H1 (cell line): ENCODE measurements at regions of chr12 and their contacts with region 1.

Region 1: DNA sequence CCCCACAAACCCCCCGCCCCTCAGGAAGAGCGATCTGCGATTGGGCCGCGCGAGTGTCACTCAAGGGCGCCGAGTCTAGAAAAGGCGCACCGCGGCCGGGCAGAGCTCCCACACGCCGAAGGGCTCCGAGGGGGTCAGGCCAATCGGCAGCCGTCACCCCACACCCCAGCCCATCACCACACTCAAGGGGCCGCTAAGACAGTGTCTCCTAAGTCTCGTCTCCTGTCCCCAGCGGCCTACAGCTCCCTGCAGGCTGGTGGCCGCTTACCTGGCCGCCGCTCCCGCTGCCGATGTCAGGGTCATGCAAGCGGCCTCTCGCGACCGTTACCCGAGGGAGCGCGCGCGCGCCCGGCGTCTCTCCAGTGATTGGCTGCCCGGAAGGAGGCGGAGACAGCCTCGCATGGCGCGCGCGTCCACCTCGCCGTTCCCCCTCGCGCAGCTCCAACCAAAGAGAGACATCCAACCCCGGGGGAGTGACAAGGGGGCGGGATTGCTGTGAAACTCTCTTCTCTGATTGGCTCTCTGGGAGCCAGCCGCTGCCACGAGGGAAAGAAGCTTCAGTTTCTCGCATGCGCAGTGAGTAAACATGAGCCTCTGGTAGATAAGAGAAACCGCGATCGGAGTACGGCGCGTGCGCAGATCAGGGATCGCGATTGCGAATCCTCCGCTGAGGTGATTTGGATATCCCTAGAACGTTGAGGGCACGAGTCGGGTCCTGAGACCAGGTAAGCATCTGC is at the starts of genes MPHOSPH9 and MTRFR:
- DNase-seq: peak; percentile 96 to 98
- H3K4me3 ChIP-seq: peak within 1 kb of the TSS; percentile 59 to 94 (median 89)
- H3K27ac ChIP-seq: peak within 1 kb of the TSS; percentile 47
- H3K4me1 ChIP-seq: peaks cover 0 to 4% (median 2%) of the 10 kb centered on the region in 4 experiments; a peak in 3 of 7 replicates
- H3K27me3 ChIP-seq: no peaks in the 10 kb centered on the region
- CTCF ChIP-seq: no peak
- EP300 ChIP-seq: no peak
- POLR2A ChIP-seq: peak; percentile 84 to 94
- RAD21 ChIP-seq: no peak
- total RNA-seq, gene MPHOSPH9: 47.7 and 48.8 TPM in 2 replicates
- total RNA-seq, gene MTRFR: 12.0 and 12.9 TPM in 2 replicates

Region 2: GRCh38 chr12:122980183-122981046 is 252.6 kb before region 1 on chr12 and contains the start of gene ARL6IP4:
- CTCF ChIA-PET with region 1: interaction called, 8 read pairs
- POLR2A ChIA-PET with region 1: interaction called, 21 read pairs
- DNase-seq: peak in 1 of 2 experiments; percentile 78
- H3K4me3 ChIP-seq: peak within 1 kb of the TSS; percentile 77 to 92 (median 85)
- H3K27ac ChIP-seq: peak within 1 kb of the TSS; percentile 47
- H3K4me1 ChIP-seq: peaks cover 0 to 20% (median 11%) of the 10 kb centered on the region in 4 experiments; a peak in 6 of 7 replicates
- H3K27me3 ChIP-seq: no peaks in the 10 kb centered on the region
- CTCF ChIP-seq: no peak
- EP300 ChIP-seq: no peak
- POLR2A ChIP-seq: peak in 1 of 2 experiments; percentile 50; a peak in 1 of 3 replicates
- RAD21 ChIP-seq: 0 out of 4 replicates have a peak, but pooled peaks of 1 of the 2 experiments have one; percentile 3
- total RNA-seq, gene ARL6IP4: 109 and 115 TPM in 2 replicates

Region 3: DNA sequence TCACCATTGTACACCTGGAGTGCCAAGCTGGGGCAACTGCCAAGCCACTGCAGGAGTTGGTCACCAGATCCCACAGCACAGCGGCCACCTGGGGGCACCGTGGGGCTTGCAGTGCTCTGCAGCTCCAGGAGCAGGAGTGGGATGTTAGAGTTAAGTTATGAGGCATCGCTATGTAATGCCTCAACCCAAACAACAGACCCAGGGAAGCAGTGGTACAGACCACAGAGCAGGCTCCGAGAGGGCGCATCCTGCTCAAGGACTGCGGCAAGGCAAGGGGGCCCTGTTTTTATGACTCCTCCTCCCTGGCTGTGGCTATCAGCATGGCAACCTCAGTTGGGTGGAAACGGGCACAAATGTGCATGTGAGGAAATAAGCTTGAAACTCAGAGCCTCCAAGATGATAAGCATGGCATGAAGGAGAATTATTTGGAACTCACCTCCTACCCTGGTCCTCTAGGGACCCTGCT is 189.4 kb before region 1 on chr12:
- CTCF ChIA-PET with region 1: interaction called, 43 read pairs
- POLR2A ChIA-PET with region 1: interaction called, 13 read pairs
- DNase-seq: peak; percentile 27 to 68
- H3K4me3 ChIP-seq: no peak overlapping the region
- H3K27ac ChIP-seq: no peak overlapping the region
- H3K4me1 ChIP-seq: no peaks in the 10 kb centered on the region; a peak in 1 of 7 replicates
- H3K27me3 ChIP-seq: no peaks in the 10 kb centered on the region; a peak in 1 of 7 replicates
- CTCF ChIP-seq: peak; percentile 66 to 77 (median 68)
- EP300 ChIP-seq: no peak
- POLR2A ChIP-seq: no peak
- RAD21 ChIP-seq: peak; percentile 82 to 89

Region 4: DNA sequence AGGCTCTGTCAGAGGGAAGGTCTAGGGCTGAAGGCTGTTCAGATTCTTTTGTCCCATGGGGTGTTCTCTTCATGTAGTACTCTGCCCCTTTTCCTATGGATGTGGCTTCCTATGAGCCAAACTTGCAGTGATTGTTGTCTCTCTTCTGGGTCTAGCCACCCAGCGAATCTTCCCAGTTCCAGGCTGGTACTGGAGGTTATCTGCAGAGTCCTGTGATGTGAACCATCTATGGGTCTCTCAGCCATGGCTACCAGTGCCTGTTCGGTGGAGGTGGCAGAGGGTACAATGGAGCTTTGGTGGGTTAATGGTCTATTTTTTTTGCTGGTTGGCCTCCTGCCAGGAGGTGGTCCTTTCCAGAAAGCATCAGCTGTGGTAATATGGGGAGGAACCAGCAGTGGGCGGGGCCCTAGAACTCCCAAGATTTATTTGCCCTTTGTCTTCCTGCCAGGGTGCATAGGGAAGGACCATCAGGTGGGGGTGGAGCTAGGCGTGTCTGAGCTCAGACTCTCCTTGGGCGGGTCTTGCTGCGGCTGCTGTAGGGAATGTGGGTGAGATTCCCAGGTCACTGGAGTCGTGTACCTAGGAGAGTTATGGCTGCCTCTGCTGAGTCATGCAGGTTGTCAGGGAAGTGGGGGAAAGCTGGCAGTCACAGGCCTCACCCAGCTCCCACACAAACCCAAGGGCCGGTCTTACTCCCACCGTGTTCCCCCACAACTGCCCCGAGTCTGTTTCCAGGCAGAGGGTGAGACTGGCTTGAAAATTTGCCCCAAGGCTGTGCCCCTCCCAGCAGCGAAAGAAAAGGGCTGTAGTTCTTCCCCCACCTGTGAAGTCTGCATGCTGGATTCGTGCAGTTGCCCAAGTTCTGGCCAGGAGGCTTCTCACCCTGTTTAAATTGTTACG is 17.8 kb after region 1 on chr12:
- CTCF ChIA-PET with region 1: interaction called, 20 read pairs
- POLR2A ChIA-PET with region 1: interaction called, 27 read pairs
- DNase-seq: no peak
- H3K4me3 ChIP-seq: no peak overlapping the region
- H3K27ac ChIP-seq: no peak overlapping the region
- H3K4me1 ChIP-seq: peaks cover 0 to 5% (median 0%) of the 10 kb centered on the region in 4 experiments; a peak in 1 of 7 replicates
- H3K27me3 ChIP-seq: no peaks in the 10 kb centered on the region
- CTCF ChIP-seq: no peak
- EP300 ChIP-seq: no peak
- POLR2A ChIP-seq: no peak
- RAD21 ChIP-seq: no peak

Region 5: DNA sequence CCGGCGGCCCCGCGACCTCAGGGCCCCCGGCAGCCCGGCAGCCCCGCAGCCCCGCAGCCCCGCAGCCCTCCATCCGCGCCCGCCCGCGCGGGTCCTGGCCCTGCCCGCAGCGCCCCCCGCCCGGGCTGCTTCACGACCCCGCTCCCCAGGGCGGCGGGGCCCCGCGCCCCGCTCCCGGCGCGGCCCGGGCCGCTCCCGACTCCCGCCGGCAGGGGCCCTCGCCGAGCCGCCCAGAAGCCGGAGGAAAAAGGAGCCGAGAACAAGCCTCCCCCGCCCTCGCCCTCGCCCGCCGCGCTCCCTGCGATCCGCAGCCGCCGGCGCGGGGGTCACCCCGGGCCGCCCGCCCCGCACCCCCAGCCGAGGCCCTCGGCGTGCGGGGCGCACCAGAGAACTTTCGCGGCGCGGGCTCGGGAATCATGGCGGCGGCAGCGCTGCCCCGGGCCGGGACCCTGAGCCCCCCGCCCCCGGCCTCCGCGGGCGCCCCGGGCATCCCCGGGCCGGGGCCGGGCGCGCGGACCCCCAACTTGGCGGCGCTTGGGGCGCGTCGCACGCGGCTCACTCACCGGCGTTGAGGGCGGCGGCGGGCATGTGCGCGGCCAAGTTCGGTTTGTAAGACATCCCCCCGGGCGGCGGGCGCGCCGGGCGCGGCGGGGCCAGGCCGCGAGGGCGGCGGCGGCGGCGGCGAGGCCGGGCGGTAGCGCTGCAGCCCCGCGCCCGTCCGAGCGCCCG is 38.2 kb after region 1 on chr12:
- CTCF ChIA-PET with region 1: interaction called, 8 read pairs
- POLR2A ChIA-PET with region 1: interaction called, 42 read pairs
- DNase-seq: peak in 1 of 2 experiments; percentile 80
- H3K4me3 ChIP-seq: peak overlapping the region; percentile 75 to 94 (median 88)
- H3K27ac ChIP-seq: peak overlapping the region; percentile 85; the same call in 1 of the 2 replicates
- H3K4me1 ChIP-seq: peaks cover 2 to 17% (median 13%) of the 10 kb centered on the region in 4 experiments
- H3K27me3 ChIP-seq: no peaks in the 10 kb centered on the region
- CTCF ChIP-seq: peak in 2 of 3 experiments; percentile 49 to 56; a peak in 3 of 4 replicates
- EP300 ChIP-seq: no peak
- POLR2A ChIP-seq: 0 out of 3 replicates have a peak, but pooled peaks of 1 of the 2 experiments have one; percentile 50
- RAD21 ChIP-seq: peak; percentile 42 to 69

Region 6: GRCh38 chr12:123354600-123354999 is 121.6 kb after region 1 on chr12:
- CTCF ChIA-PET with region 1: no interaction called
- POLR2A ChIA-PET with region 1: no interaction called
- DNase-seq: no peak
- H3K4me3 ChIP-seq: no peak overlapping the region
- H3K27ac ChIP-seq: no peak overlapping the region
- H3K4me1 ChIP-seq: no peaks in the 10 kb centered on the region; a peak in 1 of 7 replicates
- H3K27me3 ChIP-seq: no peaks in the 10 kb centered on the region
- CTCF ChIP-seq: no peak
- EP300 ChIP-seq: no peak
- POLR2A ChIP-seq: no peak
- RAD21 ChIP-seq: no peak

Region 7: DNA sequence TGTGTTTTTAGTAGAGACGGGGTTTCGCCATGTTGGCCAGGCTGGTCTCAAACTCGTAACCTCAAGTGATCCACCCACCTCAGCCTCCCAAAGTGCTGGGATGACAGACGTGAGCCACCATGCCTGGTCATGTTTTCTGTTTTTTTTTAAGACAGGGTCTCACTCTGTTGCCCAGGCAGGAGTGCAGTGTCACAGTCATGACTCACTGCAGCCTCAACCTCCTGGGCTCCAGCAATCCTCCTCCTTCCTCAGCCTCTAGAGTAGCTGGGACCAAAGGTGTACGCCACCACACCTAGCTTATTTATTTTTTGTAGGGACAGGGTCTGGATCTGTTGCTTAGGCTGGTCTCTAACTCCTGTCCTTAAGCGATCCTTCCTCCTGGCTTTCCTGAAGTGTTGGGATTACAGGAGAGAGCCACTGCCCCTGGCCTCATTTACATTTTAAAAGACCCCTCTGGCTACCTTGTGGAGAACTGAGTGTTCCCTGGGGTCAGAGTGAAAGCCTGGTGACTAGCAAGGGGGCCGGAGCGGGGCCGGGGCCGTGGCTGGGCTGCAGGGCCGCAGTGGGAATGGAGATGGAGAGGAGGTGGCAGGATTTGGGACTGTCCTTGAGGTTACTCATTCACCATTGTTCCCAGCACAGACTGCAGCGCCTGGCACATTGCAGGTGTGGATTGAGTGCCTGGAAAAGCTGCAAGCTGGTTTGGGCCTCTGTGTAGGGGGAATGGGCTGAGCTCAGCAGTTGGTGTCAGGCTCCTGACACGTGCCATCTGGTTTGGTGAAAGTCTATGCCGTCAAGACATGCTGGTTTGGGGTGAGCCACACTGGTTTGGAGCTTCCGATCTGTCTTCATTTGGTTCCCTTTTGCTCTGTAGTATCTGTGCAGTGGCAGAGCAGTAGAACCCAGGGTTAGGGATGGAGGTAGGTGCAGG is 169.0 kb after region 1 on chr12:
- CTCF ChIA-PET with region 1: no interaction called
- POLR2A ChIA-PET with region 1: no interaction called
- DNase-seq: peak; percentile 34 to 76
- H3K4me3 ChIP-seq: no peak overlapping the region
- H3K27ac ChIP-seq: no peak overlapping the region
- H3K4me1 ChIP-seq: peaks cover 2 to 6% (median 5%) of the 10 kb centered on the region in 4 experiments; a peak in 6 of 7 replicates
- H3K27me3 ChIP-seq: peaks cover 11 to 56% (median 44%) of the 10 kb centered on the region in 4 experiments
- CTCF ChIP-seq: no peak
- EP300 ChIP-seq: no peak
- POLR2A ChIP-seq: no peak
- RAD21 ChIP-seq: no peak; a peak in 2 of 4 replicates

Region 8: GRCh38 chr12:123519141-123520001 is 286.4 kb after region 1 on chr12:
- CTCF ChIA-PET with region 1: no interaction called
- POLR2A ChIA-PET with region 1: no interaction called
- DNase-seq: no peak
- H3K4me3 ChIP-seq: no peak overlapping the region
- H3K27ac ChIP-seq: no peak overlapping the region
- H3K4me1 ChIP-seq: 0 out of 7 replicates have a peak, but pooled peaks cover 0 to 2% (median 0%) of the 10 kb centered on the region in 4 experiments
- H3K27me3 ChIP-seq: no peaks in the 10 kb centered on the region
- CTCF ChIP-seq: no peak
- EP300 ChIP-seq: no peak
- POLR2A ChIP-seq: no peak
- RAD21 ChIP-seq: no peak